ENCODE measurements at regions of chr12 and their contacts with region 1.

Region 1: DNA sequence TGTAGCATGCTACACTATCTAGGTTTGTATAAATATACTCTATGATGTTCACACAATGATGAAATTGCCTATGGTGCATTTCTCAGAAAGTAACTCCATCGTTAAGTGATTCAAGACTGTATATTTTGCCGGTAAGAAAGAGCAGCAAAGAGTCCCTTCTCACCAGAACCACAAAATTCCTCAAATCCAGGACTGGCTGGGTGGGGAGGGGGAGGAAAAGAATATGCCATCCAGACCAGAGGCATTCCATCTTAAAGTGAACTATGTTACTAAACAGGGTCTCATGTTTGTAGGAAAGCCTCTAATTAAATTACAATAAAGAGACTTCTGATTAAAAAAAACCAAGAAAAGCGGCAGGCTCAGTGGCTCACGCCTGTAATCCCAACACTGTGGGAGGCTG is 11.5 kb downstream of the UBE2N start:
- DNase-seq: no peak
- H3K4me3 ChIP-seq: no peak overlapping the region
- H3K27me3 ChIP-seq: no peaks in the 10 kb centered on the region
- CTCF ChIP-seq: no peak

Region 2: DNA sequence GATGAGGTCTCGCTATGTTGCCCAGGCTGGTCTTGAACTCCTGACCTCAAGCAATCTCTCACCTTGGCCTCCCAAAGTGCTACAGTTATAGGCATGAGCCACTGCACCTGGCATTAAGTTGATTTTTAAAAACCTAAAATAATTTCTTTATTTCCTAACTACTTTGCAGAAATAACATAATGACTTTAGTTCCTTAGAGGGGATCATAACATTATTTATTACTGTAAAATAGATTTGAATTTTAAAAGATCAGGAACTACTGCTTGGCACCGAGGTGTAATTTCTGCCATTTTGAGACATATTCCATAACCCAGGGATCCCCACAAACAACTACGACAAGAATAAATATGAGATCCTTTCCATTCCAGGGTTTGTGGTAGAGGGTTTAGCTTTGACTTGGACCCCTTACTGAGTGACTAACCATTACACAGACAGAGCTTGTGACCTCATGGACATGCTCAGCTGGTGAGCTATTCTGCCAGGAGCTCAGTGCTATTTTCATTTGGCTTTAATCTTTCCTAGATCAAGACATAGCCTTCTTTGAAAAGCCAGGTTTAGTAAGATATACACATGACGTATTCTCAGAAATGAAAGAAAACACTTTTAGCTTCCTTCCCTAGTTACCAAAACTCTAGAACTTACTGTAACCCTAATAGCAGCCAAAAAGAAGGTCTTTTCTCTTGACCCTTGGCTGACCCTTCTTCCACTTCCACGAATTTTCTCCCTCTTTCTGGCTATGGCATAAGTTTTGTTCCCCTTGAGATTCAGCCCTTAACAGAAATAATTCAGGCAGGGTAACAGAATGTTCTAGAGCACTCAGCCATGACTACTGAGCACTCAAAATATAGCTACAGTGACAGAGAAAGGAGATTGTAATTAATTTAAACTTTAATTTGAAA is 127.7 kb before region 1 on chr12:
- CTCF ChIA-PET with region 1: no interaction called
- POLR2A ChIA-PET with region 1: no interaction called
- DNase-seq: no peak
- H3K4me3 ChIP-seq: no peak overlapping the region
- H3K27me3 ChIP-seq: no peaks in the 10 kb centered on the region
- CTCF ChIP-seq: no peak

Region 3: GRCh38 chr12:93419388-93420034 is 10.8 kb before region 1 on chr12:
- CTCF ChIA-PET with region 1: interaction called, 11 read pairs
- POLR2A ChIA-PET with region 1: no interaction called
- DNase-seq: peak; percentile 26
- H3K4me3 ChIP-seq: no peak overlapping the region
- H3K27me3 ChIP-seq: no peaks in the 10 kb centered on the region
- CTCF ChIP-seq: peak; percentile 53